WTC11 (cell line): ENCODE measurements at regions of chr12 and their contacts with region 1.

Region 1: DNA sequence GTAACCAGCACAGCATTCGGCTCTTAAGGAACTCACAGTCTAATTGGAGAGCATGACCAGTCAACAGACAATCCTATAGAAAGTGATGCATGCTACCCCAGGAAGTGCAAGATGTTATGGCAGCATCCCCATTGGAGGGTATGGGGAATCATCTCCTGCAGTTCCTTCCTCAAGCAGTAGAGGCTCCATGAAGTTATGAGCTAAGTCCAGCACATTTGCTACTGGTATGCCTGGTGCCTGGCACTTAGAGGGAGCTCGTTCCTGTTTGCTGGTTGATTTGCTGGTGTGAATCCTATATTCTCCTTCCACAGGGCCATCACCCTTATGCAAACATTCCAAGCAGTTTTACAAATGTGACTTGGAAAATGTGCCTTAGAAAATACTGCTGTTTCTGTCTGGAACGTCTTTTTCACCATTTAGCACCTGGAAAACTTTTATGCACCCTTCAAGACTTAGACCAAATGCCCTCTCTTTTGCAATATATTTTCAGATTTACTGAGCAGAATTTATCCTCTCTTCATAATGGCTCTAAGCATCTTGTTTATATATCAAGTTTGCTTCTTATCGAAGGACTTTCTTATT is 136.1 kb upstream of the WSCD2 start:
- DNase-seq: peak; percentile 33
- ATAC-seq: peak; percentile 99
- H3K4me3 Mint-ChIP-seq: no peak overlapping the region
- H3K27ac Mint-ChIP-seq: no peak overlapping the region
- H3K4me1 Mint-ChIP-seq: no peaks in the 10 kb centered on the region
- H3K27me3 Mint-ChIP-seq: peaks cover 11% of the 10 kb centered on the region
- CTCF ChIP-seq: peak; percentile 2; the same call in 1 of the 2 replicates

Region 2: DNA sequence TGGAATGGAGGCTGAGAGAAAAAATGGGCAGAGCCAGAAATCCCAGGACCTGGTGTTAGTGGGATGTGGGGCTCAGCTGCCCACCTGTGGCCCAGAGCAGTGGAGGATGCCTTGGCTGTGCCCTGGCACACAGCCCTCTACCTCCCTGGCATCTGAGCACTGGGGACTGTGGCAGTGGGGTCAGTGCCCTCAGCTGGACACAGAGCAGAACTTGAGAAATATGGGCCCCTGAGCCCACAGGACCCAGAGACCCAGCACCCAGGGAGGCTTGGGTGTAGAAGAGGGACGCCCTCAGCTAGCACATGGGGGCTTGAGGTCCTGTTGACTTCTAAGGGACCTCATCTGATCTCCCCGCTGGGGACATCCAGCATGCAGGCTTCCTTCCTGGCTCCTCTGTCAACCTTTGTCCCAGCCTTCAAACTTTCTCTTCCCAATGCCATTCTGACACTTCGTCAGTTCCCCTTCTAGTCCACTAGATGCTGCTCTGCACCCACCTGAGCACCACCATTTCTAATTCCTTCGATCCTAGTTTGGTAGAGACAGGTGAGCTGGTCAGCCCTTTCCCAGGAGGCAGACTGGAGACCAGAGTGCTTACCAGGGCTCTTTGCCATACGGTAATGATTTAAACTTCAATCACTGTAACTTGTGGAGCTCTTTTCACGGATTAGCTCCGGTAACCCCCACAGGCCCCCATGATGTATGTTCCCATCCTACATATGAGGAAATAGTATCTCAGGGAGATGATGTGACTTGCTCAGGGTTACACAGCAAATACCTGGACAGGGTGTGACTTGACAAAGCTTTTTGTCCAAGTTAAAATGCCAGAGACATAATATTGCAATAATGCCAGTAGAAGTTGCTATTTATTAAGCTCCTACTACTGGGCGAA is 74.8 kb before region 1 on chr12:
- CTCF ChIA-PET with region 1: interaction called, 14 read pairs
- POLR2A ChIA-PET with region 1: no interaction called
- DNase-seq: peak; percentile 50
- ATAC-seq: peak; percentile 98
- H3K4me3 Mint-ChIP-seq: no peak overlapping the region
- H3K27ac Mint-ChIP-seq: no peak overlapping the region
- H3K4me1 Mint-ChIP-seq: no peaks in the 10 kb centered on the region
- H3K27me3 Mint-ChIP-seq: peaks cover 20% of the 10 kb centered on the region
- CTCF ChIP-seq: peak; percentile 46; the same call in 1 of the 2 replicates

Region 3: GRCh38 chr12:108055141-108055540 is 62.2 kb after region 1 on chr12:
- CTCF ChIA-PET with region 1: interaction called, 12 read pairs
- POLR2A ChIA-PET with region 1: no interaction called
- DNase-seq: no peak
- ATAC-seq: no peak; the same call in 1 of the 2 replicates
- H3K4me3 Mint-ChIP-seq: no peak overlapping the region
- H3K27ac Mint-ChIP-seq: no peak overlapping the region
- H3K4me1 Mint-ChIP-seq: peaks cover 18% of the 10 kb centered on the region
- H3K27me3 Mint-ChIP-seq: no peaks in the 10 kb centered on the region
- CTCF ChIP-seq: no peak

Region 4: DNA sequence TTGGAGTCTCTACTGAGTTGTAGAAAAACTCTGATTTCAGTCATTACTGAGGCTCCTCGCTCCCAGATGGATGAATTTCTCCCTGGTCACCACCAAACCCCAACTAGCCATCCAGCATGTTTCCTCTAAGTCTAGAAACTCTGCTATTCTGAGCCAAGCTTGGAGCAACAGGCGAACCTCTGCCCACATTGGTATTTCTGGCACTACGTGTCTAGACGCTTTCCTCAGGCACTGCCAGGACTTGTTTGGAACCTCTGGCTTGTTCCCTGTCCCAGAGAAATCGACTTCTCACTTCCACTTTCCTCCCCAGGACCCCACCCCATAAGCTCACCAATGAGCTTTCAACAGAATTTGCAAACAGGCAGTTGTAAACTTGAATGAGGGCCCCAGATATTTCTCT is 163.8 kb after region 1 on chr12:
- CTCF ChIA-PET with region 1: no interaction called
- POLR2A ChIA-PET with region 1: no interaction called
- DNase-seq: no peak
- ATAC-seq: no peak
- H3K4me3 Mint-ChIP-seq: no peak overlapping the region
- H3K27ac Mint-ChIP-seq: no peak overlapping the region
- H3K4me1 Mint-ChIP-seq: peaks cover 6% of the 10 kb centered on the region
- H3K27me3 Mint-ChIP-seq: no peaks in the 10 kb centered on the region
- CTCF ChIP-seq: no peak

Region 5: DNA sequence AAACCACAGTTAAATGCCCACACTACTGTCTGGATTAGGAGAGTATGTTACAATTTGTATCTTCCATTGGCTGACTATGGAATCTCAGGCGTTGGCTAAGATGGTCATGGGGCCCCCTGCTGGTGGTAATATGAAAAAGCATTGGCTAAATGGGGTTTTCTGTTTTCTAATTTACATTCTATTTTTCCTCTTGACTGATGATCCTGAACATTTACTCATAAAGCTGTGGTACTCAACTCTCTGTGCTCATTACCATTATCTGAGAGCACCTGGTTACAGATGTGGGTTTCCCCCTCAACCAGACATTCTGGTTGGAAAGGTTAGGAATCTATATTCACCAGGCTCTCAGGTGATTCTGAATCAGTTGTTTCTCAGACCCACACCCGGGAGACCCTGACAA is 201.0 kb after region 1 on chr12:
- CTCF ChIA-PET with region 1: interaction called, 14 read pairs
- POLR2A ChIA-PET with region 1: no interaction called
- DNase-seq: peak; percentile 28
- ATAC-seq: no peak
- H3K4me3 Mint-ChIP-seq: no peak overlapping the region
- H3K27ac Mint-ChIP-seq: no peak overlapping the region
- H3K4me1 Mint-ChIP-seq: peaks cover 8% of the 10 kb centered on the region
- H3K27me3 Mint-ChIP-seq: no peaks in the 10 kb centered on the region
- CTCF ChIP-seq: peak; percentile 63

Region 6: DNA sequence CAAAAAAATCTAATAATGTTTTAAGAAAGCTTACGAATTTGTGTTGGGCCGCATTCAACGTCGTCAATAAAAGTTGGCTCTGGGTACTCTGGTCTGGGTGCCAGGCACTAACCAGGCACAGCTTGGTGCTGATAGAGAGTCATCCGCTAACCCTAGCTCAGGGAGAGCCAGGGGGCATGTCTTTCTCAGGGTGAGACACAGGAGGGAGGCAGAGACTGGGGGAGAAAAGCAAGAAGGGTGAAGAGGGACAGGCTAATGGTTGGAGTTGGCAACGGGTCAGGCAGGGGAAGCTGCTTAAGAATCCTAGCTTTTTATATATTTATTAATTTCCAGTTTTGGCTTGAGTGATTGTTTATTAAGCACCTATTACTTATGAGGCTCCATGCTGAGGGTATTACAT is 241.2 kb after region 1 on chr12:
- CTCF ChIA-PET with region 1: interaction called, 24 read pairs
- POLR2A ChIA-PET with region 1: no interaction called
- DNase-seq: no peak
- ATAC-seq: no peak
- H3K4me3 Mint-ChIP-seq: no peak overlapping the region
- H3K27ac Mint-ChIP-seq: no peak overlapping the region
- H3K4me1 Mint-ChIP-seq: peaks cover 32% of the 10 kb centered on the region
- H3K27me3 Mint-ChIP-seq: no peaks in the 10 kb centered on the region; the same call in 1 of the 2 replicates
- CTCF ChIP-seq: no peak